ENCODE measurements at regions of chr1 and their contacts with region 1.

Region 1: DNA sequence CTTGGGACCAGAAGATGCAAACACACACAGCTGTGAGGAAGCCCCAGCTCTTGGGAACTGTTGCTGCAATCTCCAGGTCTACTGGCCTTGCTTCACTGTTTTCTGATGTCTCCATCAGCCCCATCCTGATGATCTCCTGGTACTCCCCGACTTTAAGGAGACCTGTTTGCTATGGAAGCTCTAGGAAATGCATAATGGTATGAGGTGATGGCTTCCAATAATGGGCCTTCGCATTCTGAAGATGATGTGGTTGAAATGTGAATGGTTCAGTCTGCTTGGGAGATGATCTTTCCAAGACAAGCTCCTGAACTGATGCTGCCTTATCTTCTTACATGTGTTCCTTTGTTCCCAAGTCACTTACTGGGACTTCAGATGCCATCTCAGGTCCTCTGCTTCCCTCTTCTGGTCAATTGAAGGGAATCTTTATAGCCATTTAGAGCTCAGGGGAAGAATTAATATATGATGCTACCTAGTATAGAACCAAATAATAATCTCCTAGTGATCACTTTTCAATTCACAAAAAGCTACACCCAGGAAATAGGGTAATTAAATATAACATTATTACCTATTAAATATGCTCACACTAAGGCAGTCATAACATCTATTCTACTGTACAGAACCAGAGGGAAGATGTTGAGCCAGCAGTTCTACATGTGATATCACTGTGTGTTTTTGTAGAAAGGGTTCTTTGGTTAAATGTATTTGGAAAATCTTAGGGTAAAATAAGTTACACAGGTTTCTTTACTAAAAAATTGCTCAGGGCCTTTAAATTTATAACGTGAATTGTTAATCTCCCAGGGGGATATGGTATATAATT is 73.9 kb upstream of the VTCN1 start:
- DNase-seq: no peak
- H3K4me3 ChIP-seq: no peak overlapping the region
- H3K27ac ChIP-seq: no peak overlapping the region
- H3K27me3 ChIP-seq: no peaks in the 10 kb centered on the region
- CTCF ChIP-seq: peak in 55 of 56 donors; percentile 27 to 83 (median 63)

Region 2: GRCh38 chr1:117067533-117068370 is 216.9 kb before region 1 on chr1:
- intact Hi-C with region 1: loop called (anchors 1 to 5 kb)
- DNase-seq: peak; percentile 31 to 78 (median 70)
- H3K4me3 ChIP-seq: no peak overlapping the region
- H3K27ac ChIP-seq: no peak overlapping the region
- H3K27me3 ChIP-seq: no peaks in the 10 kb centered on the region
- CTCF ChIP-seq: peak; percentile 46 to 99 (median 93)

Region 3: DNA sequence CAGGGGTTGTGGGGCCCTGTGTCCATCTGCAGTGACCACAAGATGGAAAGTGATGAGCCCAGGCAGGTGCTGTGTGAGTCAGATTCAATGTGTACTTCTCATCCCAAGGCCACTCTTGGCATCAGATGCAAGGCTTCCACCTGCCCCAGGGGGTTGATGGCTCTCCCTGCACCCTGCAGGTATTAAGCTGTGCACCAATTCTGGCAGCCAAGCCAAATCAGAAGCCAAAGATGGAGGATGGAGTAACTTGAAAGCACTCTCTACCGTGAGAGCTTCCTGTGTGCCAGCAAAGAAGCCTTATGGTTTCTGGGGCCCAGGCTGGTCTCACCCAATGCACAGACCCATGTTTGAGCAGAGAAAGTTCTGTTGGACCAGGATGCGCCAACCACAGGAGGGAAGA is 276.9 kb after region 1 on chr1:
- intact Hi-C with region 1: no loop called
- DNase-seq: peak in 1 of 10 donors; percentile 47
- H3K4me3 ChIP-seq: no peak overlapping the region
- H3K27ac ChIP-seq: no peak overlapping the region
- H3K27me3 ChIP-seq: peaks cover 0 to 7% (median 0%) of the 10 kb centered on the region in 45 donors
- CTCF ChIP-seq: no peak

Measured in dorsolateral prefrontal cortex (tissue), 120 donors.